ENCODE measurements at regions of chr12 and their contacts with region 1.

Region 1: DNA sequence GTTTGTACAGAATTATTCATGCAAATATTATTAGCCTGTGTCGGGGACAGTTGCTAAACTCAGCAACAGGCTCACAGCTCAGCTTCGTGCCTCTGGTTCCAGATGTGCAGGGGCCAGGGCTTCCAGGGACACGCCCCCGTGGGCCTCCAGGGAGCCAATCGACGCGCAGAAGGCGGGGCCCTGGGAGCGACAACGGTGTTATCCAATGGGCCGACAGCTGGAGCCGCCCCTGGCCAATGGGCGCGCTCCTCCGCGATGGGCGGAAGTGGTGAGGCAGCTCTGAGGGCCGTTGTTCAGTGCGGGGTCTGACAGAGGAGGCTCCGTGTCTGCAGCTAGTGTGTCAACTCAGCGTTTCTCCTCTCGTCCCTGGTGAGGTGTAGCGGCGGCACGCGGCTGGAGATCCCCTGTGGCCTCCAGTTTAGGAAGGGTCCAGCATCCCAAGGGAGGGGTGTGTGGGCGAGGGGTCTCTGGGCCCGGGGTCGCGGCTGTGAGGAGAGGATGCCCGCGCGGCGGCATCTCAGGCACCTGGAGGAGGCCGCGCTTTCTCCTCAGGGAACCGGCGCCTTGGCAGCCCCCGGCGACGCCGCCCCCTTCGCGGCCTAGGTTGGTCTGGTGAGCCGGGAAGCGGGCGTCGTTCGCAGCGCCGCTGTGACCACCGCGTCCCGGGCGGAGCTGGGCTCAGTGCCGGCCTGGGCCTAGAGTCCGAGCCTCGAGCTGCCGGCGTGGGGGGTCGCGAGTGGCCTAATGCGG is at the start of gene TRAFD1:
- DNase-seq: peak; percentile 98 to 99 (median 98)
- H3K4me3 ChIP-seq: peak within 1 kb of the TSS; percentile 79
- H3K27ac ChIP-seq: peak within 1 kb of the TSS; percentile 74 to 82
- H3K4me1 ChIP-seq: peaks cover 16% of the 10 kb centered on the region
- H3K27me3 ChIP-seq: no peaks in the 10 kb centered on the region
- CTCF ChIP-seq: no peak
- EP300 ChIP-seq: no peak
- POLR2A ChIP-seq: peak; percentile 94
- total RNA-seq, gene TRAFD1: 13.9 to 27.4 (median 25.5) TPM

Region 2: GRCh38 chr12:111975161-111975931 is 150.1 kb before region 1 on chr12:
- intact Hi-C with region 1: no loop called
- DNase-seq: no peak
- H3K4me3 ChIP-seq: no peak overlapping the region
- H3K27ac ChIP-seq: no peak overlapping the region
- H3K4me1 ChIP-seq: no peaks in the 10 kb centered on the region
- H3K27me3 ChIP-seq: no peaks in the 10 kb centered on the region
- CTCF ChIP-seq: no peak
- EP300 ChIP-seq: no peak
- POLR2A ChIP-seq: no peak

Region 3: DNA sequence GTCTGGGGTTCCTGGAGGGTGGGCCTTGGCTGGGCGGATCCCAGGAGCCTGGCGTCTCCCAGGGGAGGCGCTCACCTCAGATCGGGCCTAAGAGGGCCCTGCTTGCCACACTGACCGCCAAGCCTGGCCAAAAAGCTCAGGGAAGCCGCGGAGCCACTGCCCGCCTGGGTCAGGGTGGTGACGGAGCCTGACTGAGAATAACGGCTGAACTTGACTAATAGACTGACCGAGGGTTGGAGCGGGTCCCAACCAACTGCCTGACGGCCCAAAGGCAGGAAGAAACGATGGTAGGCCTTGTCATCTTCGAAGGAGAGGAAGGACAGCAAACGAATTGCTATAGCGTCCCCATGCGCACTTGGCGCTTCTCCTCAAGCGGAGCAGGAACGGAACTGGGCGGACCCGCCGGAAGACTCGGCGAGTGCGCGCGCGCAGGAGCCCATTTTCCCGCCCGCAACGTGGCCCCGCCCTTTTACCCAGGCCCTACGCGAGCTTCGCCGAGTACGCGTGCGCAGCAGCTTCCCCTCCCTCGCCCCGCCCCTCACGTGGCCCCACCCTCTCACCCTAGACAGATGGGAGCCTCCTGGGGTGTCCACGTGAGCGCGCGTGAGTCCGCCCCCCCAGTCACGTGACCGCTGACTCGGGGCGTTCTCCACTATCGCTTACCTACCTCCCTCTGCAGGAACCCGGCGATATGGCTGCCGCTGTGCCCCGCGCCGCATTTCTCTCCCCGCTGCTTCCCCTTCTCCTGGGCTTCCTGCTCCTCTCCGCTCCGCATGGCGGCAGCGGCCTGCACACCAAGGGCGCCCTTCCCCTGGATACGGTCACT is 112.4 kb before region 1 on chr12 and contains the starts of genes ERP29 and TMEM116:
- intact Hi-C with region 1: loop called in 1 of 4 experiments (anchors 10 kb)
- DNase-seq: peak; percentile 100
- H3K4me3 ChIP-seq: peak within 1 kb of the TSS; percentile 91
- H3K27ac ChIP-seq: peak within 1 kb of the TSS; percentile 83 to 87
- H3K4me1 ChIP-seq: peaks cover 14% of the 10 kb centered on the region
- H3K27me3 ChIP-seq: no peaks in the 10 kb centered on the region
- CTCF ChIP-seq: peak; percentile 50 to 86 (median 73)
- EP300 ChIP-seq: no peak
- POLR2A ChIP-seq: peak; percentile 98
- total RNA-seq, gene ERP29: 28.1 to 76.7 (median 68.3) TPM
- total RNA-seq, gene TMEM116: 10.6 to 16.7 (median 11.3) TPM

Region 4: DNA sequence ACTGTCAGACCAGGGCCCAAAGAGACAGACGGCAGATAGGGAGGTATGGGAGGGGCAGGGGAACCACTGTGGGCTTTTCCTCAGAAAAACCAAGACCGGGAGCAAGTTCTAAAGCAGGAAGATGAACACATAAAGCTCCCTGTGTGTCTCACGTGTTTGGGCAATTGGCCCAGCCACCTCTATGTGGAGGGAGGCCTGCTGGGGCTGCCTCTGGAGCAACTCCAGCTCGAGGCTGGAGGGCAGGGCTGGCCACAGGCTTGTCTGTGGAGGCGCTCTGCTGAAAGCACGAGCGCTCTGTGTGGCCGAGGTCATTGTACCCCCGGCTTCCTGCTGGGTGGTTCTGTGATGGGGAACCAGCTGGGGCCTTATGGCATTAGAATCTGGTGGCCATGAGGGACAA is 36.3 kb after region 1 on chr12:
- intact Hi-C with region 1: no loop called
- DNase-seq: peak in 1 of 5 donors; percentile 21
- H3K4me3 ChIP-seq: no peak overlapping the region
- H3K27ac ChIP-seq: no peak overlapping the region
- H3K4me1 ChIP-seq: no peaks in the 10 kb centered on the region
- H3K27me3 ChIP-seq: no peaks in the 10 kb centered on the region
- CTCF ChIP-seq: no peak
- EP300 ChIP-seq: no peak
- POLR2A ChIP-seq: no peak

Region 5: DNA sequence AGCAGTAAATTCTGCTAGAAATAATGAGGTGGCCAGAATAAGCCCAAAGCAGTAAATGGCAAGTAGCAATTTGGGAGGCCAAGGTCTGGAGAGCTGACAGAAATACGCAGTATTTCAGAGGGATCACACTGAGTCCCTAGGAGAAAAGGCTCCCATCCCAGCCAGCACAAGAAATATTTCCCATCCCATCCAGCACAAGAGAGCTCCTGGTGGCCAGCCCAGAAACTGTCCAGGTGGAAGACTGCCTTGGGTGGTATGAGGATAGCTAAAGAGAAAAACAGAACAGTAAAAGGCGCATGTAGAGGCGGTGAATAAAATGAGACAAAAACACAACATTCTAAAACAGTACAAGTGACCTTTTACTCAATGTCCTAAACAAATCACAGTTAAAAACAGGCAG is 136.1 kb after region 1 on chr12:
- intact Hi-C with region 1: no loop called
- DNase-seq: no peak
- H3K4me3 ChIP-seq: no peak overlapping the region
- H3K27ac ChIP-seq: no peak overlapping the region
- H3K4me1 ChIP-seq: no peaks in the 10 kb centered on the region
- H3K27me3 ChIP-seq: no peaks in the 10 kb centered on the region
- CTCF ChIP-seq: no peak
- EP300 ChIP-seq: no peak
- POLR2A ChIP-seq: no peak

Measured in ovary (tissue), 10 donors.